Endothelial cell of umbilical vein (primary cell): ENCODE measurements at regions of chr16 and their contacts with region 1.

Region 1: DNA sequence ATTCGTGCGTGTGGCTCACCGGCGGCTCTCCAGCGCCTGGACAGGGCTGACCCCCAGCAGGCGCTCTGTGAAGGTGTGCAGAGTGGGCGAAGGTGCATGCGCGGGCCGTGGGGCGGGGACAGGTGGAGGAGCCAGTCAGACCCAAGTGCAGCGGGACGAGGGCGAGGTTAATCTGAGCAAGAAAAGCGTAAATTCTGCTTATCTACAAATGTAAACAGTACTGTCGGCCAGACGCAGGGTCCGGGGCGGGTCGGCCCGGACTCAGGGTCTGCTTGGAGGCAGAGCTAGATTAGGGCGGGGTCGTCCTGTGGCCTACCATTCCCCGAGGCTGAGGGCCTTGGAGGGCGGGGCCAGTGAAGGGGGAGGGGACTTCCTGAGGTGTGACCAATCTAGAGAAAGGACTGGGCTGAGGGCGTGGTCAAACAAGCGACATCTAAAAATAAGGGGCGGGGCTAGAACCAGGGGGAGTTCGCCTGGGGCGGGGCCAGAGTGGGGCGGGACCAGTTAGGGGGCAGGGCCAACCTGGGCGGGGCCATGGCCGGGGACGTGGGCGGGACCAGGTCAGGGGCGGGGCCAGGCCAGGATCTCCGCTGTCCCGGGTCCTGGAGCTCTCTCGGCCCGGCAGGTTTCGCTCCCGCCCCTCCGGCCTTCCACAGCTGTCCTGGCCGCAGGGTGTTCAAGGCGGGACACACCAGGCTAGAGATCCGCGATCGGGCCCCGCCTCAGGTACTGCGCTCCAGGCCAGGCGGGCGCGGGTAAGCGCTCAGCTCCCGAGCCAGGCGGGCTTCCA is at the start of gene SEC14L5:
- DNase-seq: peak; percentile 98
- H3K4me3 ChIP-seq: peak within 1 kb of the TSS; percentile 40 to 73 (median 65)
- H3K27ac ChIP-seq: no peak within 1 kb of the TSS
- H3K4me1 ChIP-seq: peaks cover 5% of the 10 kb centered on the region
- H3K27me3 ChIP-seq: peaks cover 0 to 2% of the 10 kb centered on the region in 2 experiments
- CTCF ChIP-seq: no peak
- POLR2A ChIP-seq: no peak
- total RNA-seq, gene SEC14L5: not detected in 2 replicates

Region 2: GRCh38 chr16:4616047-4616811 is 341.7 kb before region 1 on chr16:
- CTCF ChIA-PET with region 1: no interaction called
- POLR2A ChIA-PET with region 1: no interaction called
- dilution Hi-C with region 1: no loop called
- intact Hi-C with region 1: loop called (anchors 5 kb)
- DNase-seq: peak; percentile 99
- H3K4me3 ChIP-seq: peak overlapping the region in 2 of 3 experiments; percentile 17 to 19
- H3K27ac ChIP-seq: peak overlapping the region; percentile 79
- H3K4me1 ChIP-seq: peaks cover 21% of the 10 kb centered on the region
- H3K27me3 ChIP-seq: no peaks in the 10 kb centered on the region
- CTCF ChIP-seq: peak; percentile 16 to 58
- POLR2A ChIP-seq: peak; percentile 71

Region 3: GRCh38 chr16:4713663-4714501 is 244.0 kb before region 1 on chr16:
- CTCF ChIA-PET with region 1: no interaction called
- POLR2A ChIA-PET with region 1: no interaction called
- dilution Hi-C with region 1: no loop called
- intact Hi-C with region 1: loop called (anchors 1 kb)
- DNase-seq: no peak
- H3K4me3 ChIP-seq: no peak overlapping the region
- H3K27ac ChIP-seq: no peak overlapping the region
- H3K4me1 ChIP-seq: no peaks in the 10 kb centered on the region
- H3K27me3 ChIP-seq: no peaks in the 10 kb centered on the region
- CTCF ChIP-seq: no peak
- POLR2A ChIP-seq: no peak

Region 4: GRCh38 chr16:4743226-4743897 is 214.6 kb before region 1 on chr16:
- CTCF ChIA-PET with region 1: no interaction called
- POLR2A ChIA-PET with region 1: no interaction called
- dilution Hi-C with region 1: no loop called
- intact Hi-C with region 1: no loop called
- DNase-seq: no peak
- H3K4me3 ChIP-seq: no peak overlapping the region
- H3K27ac ChIP-seq: no peak overlapping the region
- H3K4me1 ChIP-seq: no peaks in the 10 kb centered on the region
- H3K27me3 ChIP-seq: no peaks in the 10 kb centered on the region
- CTCF ChIP-seq: no peak
- POLR2A ChIP-seq: no peak

Region 5: GRCh38 chr16:4766874-4767628 is 190.9 kb before region 1 on chr16 and contains the start of gene ZNF500:
- CTCF ChIA-PET with region 1: interaction called, 3 read pairs
- POLR2A ChIA-PET with region 1: no interaction called
- dilution Hi-C with region 1: no loop called
- intact Hi-C with region 1: loop called (anchors 2 kb)
- DNase-seq: peak; percentile 97
- H3K4me3 ChIP-seq: peak within 1 kb of the TSS; percentile 46 to 98 (median 55)
- H3K27ac ChIP-seq: peak within 1 kb of the TSS; percentile 42
- H3K4me1 ChIP-seq: peaks cover 15% of the 10 kb centered on the region
- H3K27me3 ChIP-seq: no peaks in the 10 kb centered on the region
- CTCF ChIP-seq: no peak
- POLR2A ChIP-seq: peak; percentile 85
- total RNA-seq, gene ZNF500: 12.2 and 13.5 TPM in 2 replicates

Region 6: GRCh38 chr16:4846891-4847773 is 110.8 kb before region 1 on chr16 and contains the starts of genes GLYR1 and UBN1:
- CTCF ChIA-PET with region 1: interaction called, 5 read pairs
- POLR2A ChIA-PET with region 1: no interaction called
- dilution Hi-C with region 1: no loop called
- intact Hi-C with region 1: loop called (anchors 1 kb)
- DNase-seq: peak; percentile 97
- H3K4me3 ChIP-seq: peak within 1 kb of the TSS; percentile 86 to 96 (median 86)
- H3K27ac ChIP-seq: peak within 1 kb of the TSS; percentile 84
- H3K4me1 ChIP-seq: peaks cover 40% of the 10 kb centered on the region
- H3K27me3 ChIP-seq: no peaks in the 10 kb centered on the region
- CTCF ChIP-seq: no peak
- POLR2A ChIP-seq: peak; percentile 81
- total RNA-seq, gene GLYR1: 107 TPM in 2 replicates
- total RNA-seq, gene UBN1: 44.8 and 45.3 TPM in 2 replicates

Region 7: GRCh38 chr16:4892361-4893102 is 65.4 kb before region 1 on chr16:
- CTCF ChIA-PET with region 1: interaction called, 10 read pairs
- POLR2A ChIA-PET with region 1: no interaction called
- dilution Hi-C with region 1: no loop called
- intact Hi-C with region 1: loop called (anchors 10 kb)
- DNase-seq: no peak
- H3K4me3 ChIP-seq: no peak overlapping the region
- H3K27ac ChIP-seq: no peak overlapping the region
- H3K4me1 ChIP-seq: no peaks in the 10 kb centered on the region
- H3K27me3 ChIP-seq: no peaks in the 10 kb centered on the region
- CTCF ChIP-seq: no peak
- POLR2A ChIP-seq: no peak

Region 8: GRCh38 chr16:5033256-5034169 is 75.6 kb after region 1 on chr16 and contains the start of gene NAGPA:
- CTCF ChIA-PET with region 1: no interaction called
- POLR2A ChIA-PET with region 1: no interaction called
- dilution Hi-C with region 1: no loop called
- intact Hi-C with region 1: loop called (anchors 5 kb)
- DNase-seq: peak; percentile 81
- H3K4me3 ChIP-seq: peak within 1 kb of the TSS; percentile 47 to 86 (median 83)
- H3K27ac ChIP-seq: peak within 1 kb of the TSS; percentile 28
- H3K4me1 ChIP-seq: peaks cover 12% of the 10 kb centered on the region
- H3K27me3 ChIP-seq: no peaks in the 10 kb centered on the region
- CTCF ChIP-seq: no peak
- POLR2A ChIP-seq: peak; percentile 82
- total RNA-seq, gene NAGPA: 26.3 and 29.9 TPM in 2 replicates

Region 9: DNA sequence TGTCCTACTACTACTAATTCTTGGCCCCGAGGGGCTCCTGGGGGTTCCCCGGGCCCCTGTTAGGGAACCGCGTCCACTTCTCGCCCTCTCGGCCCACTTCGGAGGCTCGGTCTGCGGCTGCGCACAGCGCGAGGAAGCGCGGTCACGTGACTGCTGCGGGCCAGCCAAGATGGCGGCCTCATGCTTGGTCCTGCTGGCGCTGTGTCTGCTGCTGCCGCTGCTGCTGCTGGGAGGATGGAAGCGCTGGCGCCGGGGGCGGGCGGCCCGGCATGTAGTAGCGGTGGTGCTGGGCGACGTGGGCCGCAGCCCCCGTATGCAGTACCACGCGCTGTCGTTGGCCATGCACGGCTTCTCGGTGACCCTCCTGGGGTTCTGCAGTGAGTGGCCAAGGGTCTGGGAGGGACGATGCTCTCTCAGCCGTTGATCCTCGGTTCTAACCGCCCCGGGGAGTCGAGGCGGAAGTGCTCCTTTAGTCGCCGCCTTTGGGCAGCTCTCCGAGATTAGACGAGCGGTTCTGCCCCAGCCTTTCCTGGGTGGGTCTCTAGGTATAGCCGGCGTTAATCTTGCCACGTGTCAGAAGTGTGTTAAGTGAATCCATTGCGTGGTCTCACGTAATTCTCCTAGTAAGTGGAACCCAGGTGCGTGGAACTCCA is 113.9 kb after region 1 on chr16 and contains the start of gene ALG1:
- CTCF ChIA-PET with region 1: no interaction called
- POLR2A ChIA-PET with region 1: no interaction called
- dilution Hi-C with region 1: no loop called
- intact Hi-C with region 1: no loop called
- DNase-seq: peak; percentile 90
- H3K4me3 ChIP-seq: peak within 1 kb of the TSS; percentile 50 to 79 (median 65)
- H3K27ac ChIP-seq: peak within 1 kb of the TSS; percentile 58
- H3K4me1 ChIP-seq: peaks cover 8% of the 10 kb centered on the region
- H3K27me3 ChIP-seq: no peaks in the 10 kb centered on the region
- CTCF ChIP-seq: no peak
- POLR2A ChIP-seq: peak; percentile 95
- total RNA-seq, gene ALG1: 33.7 and 37.1 TPM in 2 replicates